ENCODE measurements at regions of chr22 and their contacts with region 1.

Region 1: GRCh38 chr22:37043828-37044538 is 7.6 kb upstream of the KCTD17 start:
- H3K4me3 ChIP-seq: no peak overlapping the region
- H3K27ac ChIP-seq: no peak overlapping the region
- H3K4me1 ChIP-seq: no peaks in the 10 kb centered on the region
- CTCF ChIP-seq: peak; percentile 70

Region 2: GRCh38 chr22:37032546-37033460 is 11.2 kb before region 1 on chr22:
- CTCF ChIA-PET with region 1: interaction called, 14 read pairs
- POLR2A ChIA-PET with region 1: interaction called, 3 read pairs
- H3K4me3 ChIP-seq: no peak overlapping the region
- H3K27ac ChIP-seq: no peak overlapping the region
- H3K4me1 ChIP-seq: no peaks in the 10 kb centered on the region
- CTCF ChIP-seq: no peak

Measured in HEK293 (cell line).